ENCODE measurements at regions of chr3 and their contacts with region 1.

Region 1: DNA sequence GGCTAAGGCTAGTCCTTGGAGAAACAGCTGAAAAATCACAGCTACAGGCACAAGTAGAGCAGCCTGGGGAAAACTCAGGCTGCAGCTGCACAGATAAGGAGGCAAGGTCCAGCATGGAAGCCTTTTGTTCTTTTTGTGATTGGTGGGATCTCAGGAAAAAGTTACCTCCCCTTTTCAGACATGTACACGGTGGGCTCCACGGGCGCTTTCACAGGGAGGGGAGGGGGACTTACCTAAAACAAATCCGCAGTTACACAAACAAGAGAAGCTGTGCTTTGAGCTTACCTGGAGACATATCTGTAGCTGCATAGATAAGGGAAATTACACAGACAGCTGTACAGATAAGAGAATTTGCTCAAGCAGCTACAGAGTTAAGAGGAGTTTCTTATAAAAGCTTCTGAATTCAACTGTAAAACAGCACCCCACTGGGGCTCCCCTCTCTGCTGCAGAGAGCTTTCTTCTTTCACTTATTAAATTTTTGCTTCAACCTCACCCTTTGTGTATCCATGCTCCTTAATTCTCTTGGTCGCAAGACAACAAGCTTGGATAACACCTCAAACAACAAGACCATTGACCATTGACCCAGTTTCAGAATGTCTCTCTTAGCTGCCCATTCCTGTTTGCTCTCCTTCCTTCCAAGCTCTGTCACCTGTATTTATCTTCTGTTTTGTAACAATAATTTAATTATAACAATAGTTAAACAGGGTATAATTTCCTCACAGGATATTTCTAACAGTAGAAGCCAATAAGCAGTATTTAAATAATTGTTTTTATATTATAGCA is 10.9 kb upstream of the CD200 start:
- DNase-seq: no peak
- ATAC-seq: no peak
- H3K4me3 Mint-ChIP-seq: no peak overlapping the region
- H3K27ac Mint-ChIP-seq: no peak overlapping the region
- H3K4me1 Mint-ChIP-seq: no peaks in the 10 kb centered on the region
- H3K27me3 Mint-ChIP-seq: peaks cover 10% of the 10 kb centered on the region

Region 2: DNA sequence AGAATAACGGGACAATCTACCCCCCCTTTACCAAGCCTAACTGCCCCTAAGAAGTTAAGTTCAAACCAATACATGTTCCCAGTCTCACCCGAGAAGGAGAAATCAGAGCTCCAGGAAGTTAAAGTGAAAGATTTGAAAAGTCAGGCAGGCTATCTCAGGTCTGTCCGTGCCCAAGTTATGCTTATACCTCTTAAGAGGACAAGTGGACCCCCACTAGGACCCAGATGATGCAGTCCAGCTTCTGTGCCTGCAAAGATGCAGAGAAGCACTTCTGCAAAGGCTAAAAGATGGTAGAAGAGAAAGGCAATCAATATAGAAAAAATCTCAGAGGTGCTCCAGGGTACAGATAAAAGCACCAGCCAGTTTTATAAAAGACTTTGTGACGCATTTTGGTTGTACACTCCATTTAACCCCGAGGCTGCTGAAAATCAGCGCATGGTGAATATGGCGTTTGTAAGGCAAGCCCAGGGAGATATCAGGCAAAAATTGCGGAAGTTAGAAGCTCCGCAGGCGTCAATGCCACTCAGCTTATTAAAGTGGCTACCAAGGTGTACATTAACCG is 18.2 kb before region 1 on chr3:
- CTCF ChIA-PET with region 1: interaction called, 23 read pairs
- POLR2A ChIA-PET with region 1: interaction called, 5 read pairs
- DNase-seq: no peak
- ATAC-seq: peak; percentile 57
- H3K4me3 Mint-ChIP-seq: no peak overlapping the region
- H3K27ac Mint-ChIP-seq: no peak overlapping the region
- H3K4me1 Mint-ChIP-seq: peaks cover 1% of the 10 kb centered on the region
- H3K27me3 Mint-ChIP-seq: no peaks in the 10 kb centered on the region

Region 3: DNA sequence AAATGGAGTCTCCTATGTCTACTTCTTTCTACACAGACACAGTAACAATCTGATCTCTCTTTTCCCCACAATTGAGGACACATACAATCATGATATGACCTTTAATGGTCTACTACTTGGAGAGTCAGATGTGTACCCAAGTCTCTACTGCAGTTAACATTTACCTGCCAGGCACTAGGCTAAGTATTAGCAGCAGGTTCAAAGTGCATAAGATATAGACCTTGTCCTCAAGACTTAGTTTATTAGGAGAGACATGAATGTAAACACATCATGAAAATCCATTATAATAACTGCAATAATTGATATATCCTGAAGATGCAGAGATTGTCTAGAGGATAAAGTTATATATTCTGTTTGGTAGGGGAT is 242.9 kb after region 1 on chr3:
- CTCF ChIA-PET with region 1: no interaction called
- POLR2A ChIA-PET with region 1: no interaction called
- DNase-seq: no peak
- ATAC-seq: no peak
- H3K4me3 Mint-ChIP-seq: no peak overlapping the region
- H3K27ac Mint-ChIP-seq: no peak overlapping the region
- H3K4me1 Mint-ChIP-seq: peaks cover 18% of the 10 kb centered on the region
- H3K27me3 Mint-ChIP-seq: no peaks in the 10 kb centered on the region

Measured in activated CD8-positive, alpha-beta T cell treated with anti-CD3 and anti-CD28 coated beads, Interleukin-2, amount 10 ng/mL, durations not matched to agents 7 days and 5 days (primary cell).